Panc1 (cell line): ENCODE measurements at regions of chr4 and their contacts with region 1.

Region 1: DNA sequence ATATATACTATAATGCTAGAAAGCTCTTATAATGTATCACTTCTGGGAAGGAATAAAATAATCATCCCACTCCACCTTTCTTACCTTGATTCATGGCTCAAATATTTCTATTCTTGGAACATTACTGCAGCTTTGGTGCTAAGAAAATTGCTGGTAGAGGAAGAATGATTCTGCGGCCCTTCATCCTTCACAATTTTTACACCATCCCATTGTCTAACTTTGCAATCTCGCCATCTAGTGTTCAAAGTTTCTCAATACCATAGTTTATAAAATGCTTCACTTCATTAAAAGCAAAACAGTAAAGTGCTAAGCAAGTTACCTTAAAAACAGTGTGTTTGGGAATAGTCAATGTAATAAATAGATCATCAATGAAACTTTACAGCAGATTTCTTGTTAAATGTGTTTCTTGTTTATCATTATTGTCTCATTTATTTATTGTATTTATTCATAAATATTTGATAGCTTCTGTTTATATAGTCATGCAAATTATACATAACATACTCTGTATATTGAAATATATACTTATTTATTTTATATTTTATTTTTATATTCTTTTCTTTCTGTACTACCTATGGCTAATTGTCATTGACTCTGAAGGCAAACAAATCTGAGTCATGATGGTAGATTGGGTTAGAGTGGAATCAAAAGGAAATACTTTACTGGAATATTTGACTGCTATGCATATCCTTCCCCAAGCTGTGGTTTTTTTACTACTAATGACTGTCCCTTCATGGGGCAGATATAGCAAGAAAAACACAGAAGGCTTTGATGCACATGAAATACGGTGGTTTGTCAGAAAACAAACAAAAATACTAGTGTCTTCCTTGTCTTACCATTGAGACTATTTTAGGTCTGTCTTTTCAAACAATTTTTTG is 390.7 kb downstream of the MAPK10 start:
- DNase-seq: no peak
- ATAC-seq: no peak
- H3K4me3 ChIP-seq: no peak overlapping the region
- H3K27ac ChIP-seq: no peak overlapping the region
- H3K4me1 ChIP-seq: no peaks in the 10 kb centered on the region; the same call in 1 of the 2 replicates
- H3K27me3 ChIP-seq: no peaks in the 10 kb centered on the region
- CTCF ChIP-seq: peak; percentile 47; the same call in 1 of the 2 replicates

Region 2: DNA sequence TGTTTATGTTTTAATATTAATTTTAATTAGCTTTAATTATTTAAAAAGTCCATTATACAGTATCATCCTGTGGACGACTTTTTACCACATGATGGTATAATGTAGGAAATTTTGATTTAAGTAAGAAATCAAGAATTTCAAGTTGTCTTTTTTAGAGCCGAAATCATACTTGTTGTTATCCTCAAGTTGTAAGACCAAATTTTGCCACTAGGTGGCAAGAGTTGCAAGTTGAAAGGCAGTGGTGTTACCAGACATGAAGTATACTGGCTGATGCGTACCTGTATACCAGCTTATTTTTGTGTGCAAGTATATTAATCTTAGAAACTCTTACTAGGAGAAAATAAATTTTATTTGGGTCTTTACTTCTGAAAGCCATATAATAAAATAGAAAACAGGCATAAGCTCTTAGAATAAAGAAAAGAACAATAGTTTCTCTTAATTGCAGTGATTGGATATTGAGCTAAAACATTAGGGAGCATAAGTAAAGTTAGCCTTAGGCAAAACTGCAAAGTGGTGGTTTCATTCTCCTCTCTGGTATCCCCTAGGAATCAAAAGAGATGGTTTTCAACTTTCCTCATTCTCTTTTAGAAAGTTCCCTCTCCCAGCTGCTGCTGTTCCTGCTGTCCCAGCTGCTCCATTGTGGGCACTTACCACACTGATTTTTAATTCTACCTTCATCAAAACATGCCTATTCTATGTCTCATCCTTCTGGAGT is 884.6 kb before region 1 on chr4:
- CTCF ChIA-PET with region 1: no interaction called
- POLR2A ChIA-PET with region 1: no interaction called
- in situ Hi-C with region 1: no loop called
- intact Hi-C with region 1: loop called (anchors 10 kb)
- DNase-seq: peak; percentile 38
- ATAC-seq: peak; percentile 80
- H3K4me3 ChIP-seq: no peak overlapping the region
- H3K27ac ChIP-seq: 0 out of 2 replicates have a peak overlapping the region, but pooled peaks have one; percentile 29
- H3K4me1 ChIP-seq: no peaks in the 10 kb centered on the region
- H3K27me3 ChIP-seq: no peaks in the 10 kb centered on the region
- CTCF ChIP-seq: peak; percentile 69; the same call in 1 of the 2 replicates

Region 3: DNA sequence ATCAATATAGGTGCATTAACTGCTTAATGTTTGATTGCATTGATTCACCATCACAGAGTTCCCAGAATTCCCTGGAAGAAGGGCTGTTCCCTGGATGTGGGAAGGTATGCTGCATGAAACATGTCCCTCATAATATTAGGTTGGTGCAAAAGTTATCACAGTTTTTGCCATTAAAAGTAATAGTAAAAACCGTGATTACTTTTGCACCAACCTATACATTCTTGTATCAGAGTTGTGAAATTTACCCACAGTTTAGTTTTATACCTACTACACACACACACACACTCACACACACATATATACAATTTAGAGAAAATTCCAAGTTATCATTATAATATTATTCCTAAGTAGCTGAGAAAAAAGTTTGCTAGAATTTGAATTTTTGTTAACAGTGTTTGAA is 173.2 kb before region 1 on chr4:
- CTCF ChIA-PET with region 1: interaction called, 8 read pairs
- POLR2A ChIA-PET with region 1: no interaction called
- in situ Hi-C with region 1: no loop called
- intact Hi-C with region 1: loop called (anchors 2 kb)
- DNase-seq: no peak
- ATAC-seq: no peak
- H3K4me3 ChIP-seq: no peak overlapping the region
- H3K27ac ChIP-seq: no peak overlapping the region
- H3K4me1 ChIP-seq: no peaks in the 10 kb centered on the region
- H3K27me3 ChIP-seq: no peaks in the 10 kb centered on the region
- CTCF ChIP-seq: no peak

Region 4: GRCh38 chr4:85826060-85826678 is 143.0 kb before region 1 on chr4:
- CTCF ChIA-PET with region 1: interaction called, 6 read pairs
- POLR2A ChIA-PET with region 1: no interaction called
- in situ Hi-C with region 1: no loop called
- intact Hi-C with region 1: loop called (anchors 5 kb)
- DNase-seq: no peak
- ATAC-seq: peak; percentile 70
- H3K4me3 ChIP-seq: no peak overlapping the region; a peak in 1 of 4 replicates
- H3K27ac ChIP-seq: peak overlapping the region; percentile 32
- H3K4me1 ChIP-seq: peaks cover 32% of the 10 kb centered on the region; the same call in 1 of the 2 replicates
- H3K27me3 ChIP-seq: no peaks in the 10 kb centered on the region
- CTCF ChIP-seq: peak; percentile 36